ENCODE measurements at regions of chr2 and their contacts with region 1.

Region 1: GRCh38 chr2:173884025-173884802 is 81.0 kb downstream of the SP3 start:
- DNase-seq: peak; percentile 64
- H3K4me3 ChIP-seq: no peak overlapping the region
- H3K27ac ChIP-seq: no peak overlapping the region
- H3K4me1 ChIP-seq: no peaks in the 10 kb centered on the region
- H3K27me3 ChIP-seq: peaks cover 19 to 24% of the 10 kb centered on the region in 2 experiments
- CTCF ChIP-seq: peak; percentile 68 to 70
- POLR2A ChIP-seq: no peak

Region 2: GRCh38 chr2:173843526-173843925 is 40.7 kb before region 1 on chr2:
- CTCF ChIA-PET with region 1: no interaction called
- POLR2A ChIA-PET with region 1: no interaction called
- dilution Hi-C with region 1: no loop called
- intact Hi-C with region 1: no loop called
- DNase-seq: no peak
- H3K4me3 ChIP-seq: no peak overlapping the region
- H3K27ac ChIP-seq: no peak overlapping the region
- H3K4me1 ChIP-seq: no peaks in the 10 kb centered on the region
- H3K27me3 ChIP-seq: peaks cover 6 to 13% of the 10 kb centered on the region in 2 experiments
- CTCF ChIP-seq: no peak
- POLR2A ChIP-seq: no peak

Region 3: GRCh38 chr2:173862612-173863217 is 21.5 kb before region 1 on chr2:
- CTCF ChIA-PET with region 1: interaction called, 11 read pairs
- POLR2A ChIA-PET with region 1: no interaction called
- dilution Hi-C with region 1: no loop called
- intact Hi-C with region 1: no loop called
- DNase-seq: no peak
- H3K4me3 ChIP-seq: no peak overlapping the region
- H3K27ac ChIP-seq: no peak overlapping the region
- H3K4me1 ChIP-seq: no peaks in the 10 kb centered on the region
- H3K27me3 ChIP-seq: peaks cover 4% of the 10 kb centered on the region in 2 experiments
- CTCF ChIP-seq: no peak
- POLR2A ChIP-seq: no peak

Region 4: DNA sequence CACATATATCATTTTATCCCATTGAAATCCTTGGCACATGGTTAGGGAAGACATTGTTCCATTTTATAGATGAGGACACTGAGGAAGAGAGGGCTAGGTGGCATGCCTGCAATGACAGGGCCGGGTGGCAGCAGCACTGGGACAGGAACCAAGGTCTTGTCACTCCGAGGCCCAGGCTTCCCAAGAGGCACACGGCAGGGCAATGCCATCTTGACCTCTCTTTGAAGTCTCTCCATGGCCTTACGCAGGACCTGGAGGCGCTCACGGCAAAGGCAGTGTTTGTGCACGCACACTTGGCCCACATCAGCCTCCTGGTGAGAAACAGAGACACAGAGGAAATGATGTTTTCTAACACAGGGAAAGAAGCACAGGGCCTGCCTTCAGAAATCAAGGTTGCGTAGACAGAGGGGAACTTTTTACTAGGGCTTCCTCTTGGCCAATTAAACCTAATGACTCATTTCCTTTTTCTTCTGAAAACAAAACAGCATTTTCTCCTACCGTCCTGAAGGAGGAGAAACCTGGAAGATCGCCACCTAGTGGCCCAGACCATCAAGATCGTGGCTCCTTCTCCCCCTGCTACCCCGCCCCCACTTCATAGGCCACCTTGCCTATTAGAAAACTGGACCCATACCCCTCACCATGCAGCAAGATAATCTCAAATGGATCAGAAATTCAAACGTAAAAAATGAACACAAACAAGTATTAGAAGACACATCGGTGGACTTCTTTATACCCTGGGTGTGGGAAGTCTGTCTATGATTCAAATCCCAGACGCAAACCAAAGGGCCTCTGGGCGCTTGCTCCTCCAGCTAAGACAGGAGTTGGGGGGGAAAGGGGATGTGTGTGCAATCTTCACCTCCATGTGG is 155.6 kb after region 1 on chr2:
- CTCF ChIA-PET with region 1: interaction called, 4 read pairs
- POLR2A ChIA-PET with region 1: no interaction called
- dilution Hi-C with region 1: no loop called
- intact Hi-C with region 1: loop called (anchors 1 kb)
- DNase-seq: peak; percentile 97
- H3K4me3 ChIP-seq: no peak overlapping the region
- H3K27ac ChIP-seq: peak overlapping the region; percentile 67
- H3K4me1 ChIP-seq: peaks cover 16% of the 10 kb centered on the region
- H3K27me3 ChIP-seq: no peaks in the 10 kb centered on the region
- CTCF ChIP-seq: peak; percentile 86 to 93
- POLR2A ChIP-seq: no peak

Region 5: DNA sequence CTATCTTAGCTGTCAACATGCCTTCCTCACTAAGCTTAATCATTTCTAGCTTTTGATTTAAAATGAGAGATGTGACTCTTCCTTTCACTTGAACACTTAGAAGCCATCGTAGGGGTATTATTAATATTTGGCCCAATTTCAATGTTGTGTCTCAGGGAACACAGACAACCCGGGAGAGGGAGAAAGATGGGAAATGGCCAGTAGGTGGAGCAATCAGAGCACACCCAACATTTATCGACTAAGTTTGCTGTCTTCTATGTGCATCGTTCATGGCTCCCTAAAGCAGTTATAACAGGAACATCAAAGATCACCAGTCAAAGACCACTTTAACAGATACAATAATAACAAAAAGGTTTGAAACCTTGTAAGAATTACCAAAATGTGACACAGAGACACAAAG is 253.9 kb after region 1 on chr2:
- CTCF ChIA-PET with region 1: interaction called, 5 read pairs
- POLR2A ChIA-PET with region 1: no interaction called
- dilution Hi-C with region 1: no loop called
- intact Hi-C with region 1: loop called (anchors 10 kb)
- DNase-seq: peak; percentile 64
- H3K4me3 ChIP-seq: no peak overlapping the region
- H3K27ac ChIP-seq: no peak overlapping the region
- H3K4me1 ChIP-seq: no peaks in the 10 kb centered on the region
- H3K27me3 ChIP-seq: no peaks in the 10 kb centered on the region
- CTCF ChIP-seq: peak; percentile 48 to 49
- POLR2A ChIP-seq: no peak